PC-3 (cell line): ENCODE measurements at regions of chr6 and their contacts with region 1.

Region 1: DNA sequence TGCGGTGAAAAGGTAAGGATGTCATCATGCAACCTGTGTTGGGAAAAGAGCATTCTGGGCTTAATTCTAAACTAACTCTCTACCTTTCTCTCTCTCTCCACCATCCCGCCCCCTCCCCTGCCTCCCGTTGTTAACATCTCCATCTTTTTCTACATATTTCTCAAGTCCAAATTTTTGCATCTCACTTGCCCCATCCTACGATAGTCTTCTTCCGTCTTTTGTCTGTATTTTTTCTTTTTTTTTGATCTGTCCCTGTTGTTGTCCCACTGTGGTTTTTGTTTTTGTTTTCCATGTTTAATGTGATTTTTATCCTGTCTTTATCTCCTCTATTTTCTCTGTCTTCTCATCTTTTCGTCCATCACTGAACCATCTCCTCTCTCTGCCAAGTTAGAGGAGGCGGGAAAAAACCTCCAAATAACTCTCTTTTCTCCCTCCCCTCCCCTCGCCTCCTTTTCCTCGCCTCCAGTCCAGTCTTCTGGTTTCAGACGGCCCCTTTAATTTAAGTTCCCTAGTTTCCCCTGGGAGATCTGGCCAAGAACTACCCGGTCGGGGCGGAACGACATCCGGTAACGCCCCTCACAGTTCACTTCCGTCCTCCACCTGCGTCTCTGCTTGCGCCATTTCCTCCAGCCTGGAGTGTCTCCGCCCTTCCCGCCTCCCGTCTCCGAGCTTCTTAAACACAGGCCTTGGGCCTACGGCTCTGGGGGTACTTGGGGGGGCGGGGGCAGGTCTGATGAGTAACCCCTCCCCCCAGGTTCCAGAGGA is at the start of gene NFKBIL1:
- DNase-seq: peak; percentile 95
- ATAC-seq: peak; percentile 81
- H3K4me3 ChIP-seq: peak within 1 kb of the TSS; percentile 76
- H3K27ac ChIP-seq: peak within 1 kb of the TSS; percentile 41
- H3K4me1 ChIP-seq: peaks cover 20% of the 10 kb centered on the region
- H3K27me3 ChIP-seq: no peaks in the 10 kb centered on the region
- CTCF ChIP-seq: no peak
- total RNA-seq, gene NFKBIL1: 38.2 and 46.9 TPM in 2 replicates

Region 2: DNA sequence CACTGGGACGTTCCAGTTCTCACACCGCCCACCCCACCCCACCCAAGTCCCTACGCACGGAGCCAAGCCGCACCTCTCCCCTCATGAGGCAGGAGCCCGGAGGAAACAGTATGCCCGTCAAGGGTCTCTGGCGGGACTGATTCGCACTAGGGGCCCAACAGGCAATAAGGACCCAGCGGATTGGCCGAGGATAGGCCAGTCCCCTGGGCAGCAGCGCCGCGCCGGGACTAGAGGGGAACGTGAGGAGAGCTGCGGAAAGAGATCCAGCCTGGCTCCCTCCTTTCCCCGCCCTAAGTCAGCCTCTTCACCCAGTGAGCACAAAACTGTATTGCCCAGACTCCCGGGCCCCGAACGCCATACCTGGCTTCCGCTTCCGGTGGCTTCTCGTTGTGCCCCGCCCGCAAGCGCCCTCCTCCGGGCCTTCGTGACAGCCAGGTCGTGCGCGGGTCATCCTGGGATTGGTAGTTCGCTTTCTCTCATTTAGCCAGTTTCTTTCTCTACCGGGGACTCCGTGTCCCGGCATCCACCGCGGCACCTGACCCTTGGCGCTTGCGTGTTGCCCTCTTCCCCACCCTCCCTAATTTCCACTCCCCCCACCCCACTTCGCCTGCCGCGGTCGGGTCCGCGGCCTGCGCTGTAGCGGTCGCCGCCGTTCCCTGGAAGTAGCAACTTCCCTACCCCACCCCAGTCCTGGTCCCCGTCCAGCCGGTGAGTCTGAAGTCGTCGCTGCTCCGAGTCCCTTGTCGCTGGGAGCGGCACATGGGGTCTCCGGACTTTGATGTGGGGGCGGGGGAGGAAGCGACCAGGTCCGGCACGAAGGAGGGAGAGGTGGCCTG is 118.6 kb after region 1 on chr6 and contains the start of gene CSNK2B:
- CTCF ChIA-PET with region 1: no interaction called
- POLR2A ChIA-PET with region 1: no interaction called
- intact Hi-C with region 1: loop called (anchors 5 kb)
- DNase-seq: peak; percentile 97
- ATAC-seq: peak; percentile 80
- H3K4me3 ChIP-seq: peak within 1 kb of the TSS; percentile 92
- H3K27ac ChIP-seq: peak within 1 kb of the TSS; percentile 93
- H3K4me1 ChIP-seq: peaks cover 27% of the 10 kb centered on the region
- H3K27me3 ChIP-seq: no peaks in the 10 kb centered on the region
- CTCF ChIP-seq: no peak
- total RNA-seq, gene CSNK2B: 227 and 267 TPM in 2 replicates